Head of caudate nucleus (tissue), 42 donors: ENCODE measurements at regions of chr6 and their contacts with region 1.

Region 1: GRCh38 chr6:106560996-106561685 is 68.2 kb downstream of the RTN4IP1 start:
- DNase-seq: no peak

Region 2: GRCh38 chr6:106339334-106340029 is 221.7 kb before region 1 on chr6:
- intact Hi-C with region 1: loop called (anchors 10 kb)
- DNase-seq: peak in 41 of 42 donors; percentile 3 to 84 (median 54)

Region 3: DNA sequence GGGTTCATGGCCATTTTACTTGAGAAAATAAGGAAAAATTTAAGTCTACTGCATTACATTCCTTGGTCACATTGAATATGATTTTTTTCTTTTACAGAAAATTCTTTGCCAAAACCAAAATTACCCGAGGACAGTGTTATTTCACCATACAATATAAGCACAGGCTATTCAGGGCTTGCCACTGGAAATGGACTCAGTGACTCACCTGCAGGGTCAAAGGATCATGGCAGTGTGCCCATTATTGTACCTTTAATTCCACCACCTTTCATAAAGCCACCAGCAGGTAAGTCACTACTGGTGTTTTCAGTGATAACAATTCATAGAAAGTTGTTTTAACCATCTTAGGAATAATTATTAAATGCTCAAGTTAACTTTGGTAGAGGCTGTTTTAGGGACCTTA is 945.0 kb after region 1 on chr6:
- intact Hi-C with region 1: no loop called
- DNase-seq: no peak